BJ (cell line): ENCODE measurements at regions of chr11 and their contacts with region 1.

Region 1: GRCh38 chr11:123640677-123641494 is 13.5 kb downstream of the SCN3B start:
- DNase-seq: no peak
- H3K4me3 ChIP-seq: no peak overlapping the region
- H3K27me3 ChIP-seq: peaks cover 6% of the 10 kb centered on the region
- CTCF ChIP-seq: peak; percentile 91

Region 2: DNA sequence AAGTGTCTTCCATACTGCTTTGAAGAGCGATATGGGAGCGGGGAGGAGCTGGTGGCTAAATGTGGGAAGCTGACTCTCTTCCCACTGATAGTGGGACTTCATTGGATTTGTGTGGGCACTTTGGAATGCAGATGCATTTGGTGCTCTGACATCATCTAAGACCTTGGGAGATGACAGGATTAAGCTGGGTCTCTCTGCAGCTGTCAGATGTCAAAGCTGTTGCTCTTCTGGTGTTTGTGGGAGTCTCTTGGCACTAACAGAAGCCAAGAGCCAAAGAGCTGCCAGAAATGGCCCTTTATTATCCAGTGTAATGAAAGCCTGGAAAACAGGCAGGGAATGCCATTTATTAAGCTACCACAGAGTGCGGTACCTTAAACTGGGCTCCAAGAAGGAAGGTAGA is 190.3 kb before region 1 on chr11:
- CTCF ChIA-PET with region 1: no interaction called
- POLR2A ChIA-PET with region 1: no interaction called
- DNase-seq: no peak
- H3K4me3 ChIP-seq: no peak overlapping the region
- H3K27me3 ChIP-seq: no peaks in the 10 kb centered on the region
- CTCF ChIP-seq: no peak

Region 3: GRCh38 chr11:123611698-123612097 is 29.2 kb before region 1 on chr11:
- CTCF ChIA-PET with region 1: no interaction called
- POLR2A ChIA-PET with region 1: no interaction called
- DNase-seq: no peak
- H3K4me3 ChIP-seq: no peak overlapping the region
- H3K27me3 ChIP-seq: no peaks in the 10 kb centered on the region
- CTCF ChIP-seq: no peak

Region 4: GRCh38 chr11:123630126-123630608 is 10.7 kb before region 1 on chr11:
- CTCF ChIA-PET with region 1: interaction called, 12 read pairs
- POLR2A ChIA-PET with region 1: no interaction called
- DNase-seq: no peak
- H3K4me3 ChIP-seq: no peak overlapping the region
- H3K27me3 ChIP-seq: 0 out of 2 replicates have a peak, but pooled peaks cover 4% of the 10 kb centered on the region
- CTCF ChIP-seq: no peak

Region 5: DNA sequence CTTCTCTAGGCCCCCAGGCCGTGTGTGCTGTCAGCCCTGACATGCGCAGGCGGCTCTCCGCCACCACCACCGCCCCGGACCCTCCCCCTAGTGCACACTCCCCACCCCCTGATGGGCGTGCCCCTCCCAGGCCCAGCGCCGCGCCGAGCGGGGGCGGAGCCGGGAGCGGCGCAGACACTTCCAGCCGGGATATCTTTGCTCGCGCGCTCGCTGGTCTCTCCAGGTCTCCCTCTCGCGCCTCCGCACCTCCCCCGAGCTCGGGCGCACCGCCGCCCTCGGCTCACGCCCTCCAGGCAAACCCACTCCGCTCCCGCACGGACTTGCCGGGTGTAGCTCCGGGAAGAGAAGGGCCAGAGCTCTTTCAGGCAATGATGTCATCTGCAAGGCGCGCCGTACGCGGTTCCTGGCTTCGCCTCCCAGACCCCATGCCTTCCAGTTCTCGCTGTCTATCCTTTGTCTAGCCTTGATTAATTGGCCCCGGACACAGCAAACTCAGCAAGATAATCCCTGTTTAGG is 13.7 kb after region 1 on chr11 and contains the start of gene SCN3B:
- CTCF ChIA-PET with region 1: interaction called, 10 read pairs
- POLR2A ChIA-PET with region 1: no interaction called
- DNase-seq: no peak
- H3K4me3 ChIP-seq: peak within 1 kb of the TSS; percentile 67
- H3K27me3 ChIP-seq: peaks cover 4% of the 10 kb centered on the region
- CTCF ChIP-seq: no peak
- polyA plus RNA-seq, gene SCN3B: 0.16 and 0.18 TPM in 2 replicates

Region 6: DNA sequence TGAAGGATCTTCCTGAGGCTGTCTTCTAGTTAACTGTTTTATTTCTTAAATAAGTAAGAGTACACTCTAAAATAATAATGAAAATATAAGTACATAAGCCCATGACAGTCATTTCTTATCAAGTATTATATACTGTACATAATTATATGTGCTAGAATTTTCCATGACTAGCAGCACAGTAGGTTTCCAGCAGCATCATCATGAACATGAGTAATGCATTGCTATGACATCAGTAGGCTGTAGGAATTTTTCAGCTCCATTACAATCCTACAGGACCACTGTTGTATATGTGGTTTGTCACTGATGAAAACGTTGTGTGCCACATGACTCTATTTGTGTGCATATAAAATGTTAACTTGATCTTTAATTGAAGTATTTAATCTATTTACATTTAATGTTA is 78.6 kb after region 1 on chr11:
- CTCF ChIA-PET with region 1: interaction called, 10 read pairs
- POLR2A ChIA-PET with region 1: no interaction called
- DNase-seq: no peak
- H3K4me3 ChIP-seq: no peak overlapping the region
- H3K27me3 ChIP-seq: no peaks in the 10 kb centered on the region; the same call in 1 of the 2 replicates
- CTCF ChIP-seq: no peak

Region 7: DNA sequence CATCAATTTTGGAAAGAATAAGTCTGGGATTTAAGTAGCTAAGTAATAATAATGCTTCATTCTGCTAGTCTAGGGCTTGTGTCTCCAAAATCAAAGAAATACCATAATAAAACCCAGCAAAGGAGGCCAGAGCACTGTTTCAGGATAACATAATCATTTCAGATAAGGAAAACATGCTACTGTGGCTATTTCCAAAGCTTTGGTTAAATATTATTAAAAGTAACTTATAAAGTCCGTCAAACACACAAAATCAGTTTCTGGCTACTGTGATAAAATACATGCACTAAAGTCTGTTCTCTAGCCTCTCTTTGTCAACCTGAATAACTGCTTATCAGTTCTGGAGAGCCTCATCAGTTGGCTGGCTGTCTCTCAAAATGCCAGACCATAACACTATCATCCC is 304.2 kb after region 1 on chr11:
- CTCF ChIA-PET with region 1: no interaction called
- POLR2A ChIA-PET with region 1: no interaction called
- DNase-seq: no peak
- H3K4me3 ChIP-seq: no peak overlapping the region
- H3K27me3 ChIP-seq: no peaks in the 10 kb centered on the region
- CTCF ChIP-seq: no peak